K562 (cell line): ENCODE measurements at regions of chr13 and their contacts with region 1.

Region 1: DNA sequence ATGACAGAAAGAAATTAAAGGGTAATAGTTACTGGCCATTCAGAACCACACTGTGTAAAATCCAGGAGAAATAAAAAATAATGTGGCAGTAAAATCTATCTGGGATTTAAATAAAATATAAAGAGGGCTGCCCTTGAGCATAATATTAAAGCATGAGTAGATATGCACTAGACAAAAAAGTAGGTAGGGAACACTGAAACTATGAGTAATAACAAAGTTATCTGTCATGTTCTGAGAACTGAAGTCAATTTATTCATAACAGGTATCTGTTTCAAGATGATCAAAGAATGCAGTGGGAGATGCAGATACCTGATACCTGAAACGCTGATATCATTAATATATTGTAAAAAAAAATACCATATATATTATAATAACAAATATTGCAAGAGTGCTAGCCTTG is 1672.0 kb downstream of the SLITRK5 start:
- DNase-seq: no peak
- ATAC-seq: no peak
- H3K4me3 ChIP-seq: no peak overlapping the region
- H3K27ac ChIP-seq: no peak overlapping the region
- H3K4me1 ChIP-seq: no peaks in the 10 kb centered on the region
- H3K27me3 ChIP-seq: no peaks in the 10 kb centered on the region
- CTCF ChIP-seq: no peak
- EP300 ChIP-seq: no peak
- POLR2A ChIP-seq: no peak
- RAD21 ChIP-seq: no peak

Region 2: GRCh38 chr13:89324582-89324981 is 18.6 kb before region 1 on chr13:
- CTCF ChIA-PET with region 1: no interaction called
- POLR2A ChIA-PET with region 1: no interaction called
- in situ Hi-C with region 1: no loop called
- intact Hi-C with region 1: loop called (anchors 1 kb)
- DNase-seq: no peak
- ATAC-seq: no peak
- H3K4me3 ChIP-seq: no peak overlapping the region
- H3K27ac ChIP-seq: no peak overlapping the region
- H3K4me1 ChIP-seq: no peaks in the 10 kb centered on the region
- H3K27me3 ChIP-seq: no peaks in the 10 kb centered on the region
- CTCF ChIP-seq: no peak
- EP300 ChIP-seq: no peak
- POLR2A ChIP-seq: no peak
- RAD21 ChIP-seq: no peak